Heart left ventricle (tissue), 16 donors: ENCODE measurements at regions of chr12 and their contacts with region 1.

Region 1: GRCh38 chr12:6613776-6614512 is 6.8 kb upstream of the CHD4 start:
- DNase-seq: peak; percentile 92 to 94 (median 93)
- ATAC-seq: peak; percentile 85 to 91 (median 88)
- H3K4me3 ChIP-seq: peak overlapping the region in 4 of 12 donors; percentile 3 to 47 (median 16)
- H3K27ac ChIP-seq: peak overlapping the region; percentile 72 to 98 (median 90)
- H3K4me1 ChIP-seq: peaks cover 0 to 42% (median 27%) of the 10 kb centered on the region in 12 donors
- H3K27me3 ChIP-seq: no peaks in the 10 kb centered on the region
- CTCF ChIP-seq: peak in 1 of 12 donors; percentile 10
- POLR2A ChIP-seq: no peak

Region 2: GRCh38 chr12:5898876-5899275 is 715.1 kb before region 1 on chr12:
- intact Hi-C with region 1: no loop called
- DNase-seq: no peak
- ATAC-seq: no peak
- H3K4me3 ChIP-seq: no peak overlapping the region
- H3K27ac ChIP-seq: no peak overlapping the region
- H3K4me1 ChIP-seq: peaks cover 0 to 5% (median 0%) of the 10 kb centered on the region in 12 donors
- H3K27me3 ChIP-seq: peaks cover 0 to 9% (median 0%) of the 10 kb centered on the region in 9 donors
- CTCF ChIP-seq: no peak
- POLR2A ChIP-seq: no peak

Region 3: GRCh38 chr12:6647083-6647604 is 33.2 kb after region 1 on chr12 and contains the start of gene ACRBP:
- intact Hi-C with region 1: loop called in 3 of 10 experiments (anchors 2 to 5 kb)
- DNase-seq: peak; percentile 80 to 91 (median 87)
- ATAC-seq: peak; percentile 77 to 97 (median 92)
- H3K4me3 ChIP-seq: peak within 1 kb of the TSS; percentile 3 to 65 (median 56)
- H3K27ac ChIP-seq: peak within 1 kb of the TSS in 11 of 12 donors; percentile 19 to 81 (median 62)
- H3K4me1 ChIP-seq: peaks cover 0 to 43% (median 2%) of the 10 kb centered on the region in 12 donors
- H3K27me3 ChIP-seq: no peaks in the 10 kb centered on the region
- CTCF ChIP-seq: no peak
- POLR2A ChIP-seq: peak in 1 of 2 donors; percentile 37
- total RNA-seq, gene ACRBP: 0.32 to 7.2 (median 0.99) TPM in 8 of 9 donors, not detected in the other

Region 4: GRCh38 chr12:6662906-6663742 is 49.2 kb after region 1 on chr12 and contains the start of gene ING4:
- intact Hi-C with region 1: loop called in 6 of 10 experiments (anchors 1 to 10 kb)
- DNase-seq: peak; percentile 97 to 99 (median 98)
- ATAC-seq: peak; percentile 99 to 100 (median 100)
- H3K4me3 ChIP-seq: peak within 1 kb of the TSS; percentile 40 to 86 (median 74)
- H3K27ac ChIP-seq: peak within 1 kb of the TSS; percentile 51 to 90 (median 78)
- H3K4me1 ChIP-seq: peaks cover 0 to 24% (median 12%) of the 10 kb centered on the region in 12 donors
- H3K27me3 ChIP-seq: no peaks in the 10 kb centered on the region
- CTCF ChIP-seq: no peak
- POLR2A ChIP-seq: no peak
- total RNA-seq, gene ING4: 17.4 to 39.0 (median 24.7) TPM

Region 5: GRCh38 chr12:6697584-6698351 is 83.8 kb after region 1 on chr12:
- intact Hi-C with region 1: loop called in 3 of 10 experiments (anchors 5 kb)
- DNase-seq: no peak
- ATAC-seq: peak; percentile 43 to 67 (median 65)
- H3K4me3 ChIP-seq: no peak overlapping the region
- H3K27ac ChIP-seq: no peak overlapping the region
- H3K4me1 ChIP-seq: peaks cover 0 to 15% (median 8%) of the 10 kb centered on the region in 12 donors
- H3K27me3 ChIP-seq: peaks cover 10 to 70% (median 45%) of the 10 kb centered on the region in 9 donors
- CTCF ChIP-seq: peak in 11 of 12 donors; percentile 12 to 50 (median 37)
- POLR2A ChIP-seq: no peak

Region 6: DNA sequence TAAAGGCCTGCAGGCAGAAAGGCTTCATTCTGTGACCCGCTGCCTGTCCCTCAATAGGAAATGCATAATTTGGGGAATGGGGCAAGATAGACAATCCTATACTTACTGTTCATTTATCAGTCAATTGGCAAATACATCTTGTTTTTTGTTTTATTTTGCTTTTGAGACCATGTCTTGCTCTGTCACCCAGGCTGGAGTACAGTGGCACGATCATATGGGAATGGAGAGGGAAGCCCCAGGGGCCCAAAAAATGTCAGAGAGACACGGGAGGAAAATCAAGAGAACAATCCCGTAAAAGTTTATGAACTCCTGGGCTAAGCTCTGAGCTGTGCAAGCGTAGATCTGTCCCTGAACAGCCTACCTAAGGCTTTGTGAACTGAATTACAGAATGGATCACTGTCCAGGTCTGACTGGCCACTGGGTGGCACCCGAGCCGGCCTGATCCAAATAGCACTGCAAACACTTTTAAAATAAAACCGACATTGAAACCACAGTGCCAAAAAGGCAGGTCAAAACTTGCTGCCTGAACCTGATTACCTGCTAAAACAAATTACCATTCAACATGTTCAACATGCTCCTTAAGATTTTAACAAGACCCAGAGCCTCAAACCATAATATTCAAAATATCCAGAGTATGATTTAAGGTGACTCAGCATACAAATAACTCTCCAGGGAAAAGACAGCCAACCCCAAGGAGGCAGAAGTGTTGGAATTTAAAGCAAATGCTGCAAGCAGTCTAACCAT is 121.7 kb after region 1 on chr12:
- intact Hi-C with region 1: no loop called
- DNase-seq: peak; percentile 54 to 76 (median 67)
- ATAC-seq: peak; percentile 58 to 93 (median 91)
- H3K4me3 ChIP-seq: no peak overlapping the region
- H3K27ac ChIP-seq: peak overlapping the region in 9 of 12 donors; percentile 0 to 55 (median 34)
- H3K4me1 ChIP-seq: peaks cover 0 to 12% (median 0%) of the 10 kb centered on the region in 12 donors
- H3K27me3 ChIP-seq: no peaks in the 10 kb centered on the region
- CTCF ChIP-seq: peak; percentile 55 to 83 (median 72)
- POLR2A ChIP-seq: no peak

Region 7: GRCh38 chr12:6778574-6779550 is 164.9 kb after region 1 on chr12:
- intact Hi-C with region 1: loop called in 3 of 10 experiments (anchors 2 to 10 kb)
- DNase-seq: peak; percentile 94 to 96 (median 96)
- ATAC-seq: peak; percentile 93 to 97 (median 97)
- H3K4me3 ChIP-seq: peak overlapping the region in 11 of 12 donors; percentile 23 to 62 (median 47)
- H3K27ac ChIP-seq: peak overlapping the region in 10 of 12 donors; percentile 56 to 82 (median 66)
- H3K4me1 ChIP-seq: peaks cover 0 to 21% (median 14%) of the 10 kb centered on the region in 12 donors
- H3K27me3 ChIP-seq: peaks cover 0 to 21% (median 0%) of the 10 kb centered on the region in 9 donors
- CTCF ChIP-seq: peak; percentile 93 to 99 (median 96)
- POLR2A ChIP-seq: peak in 1 of 2 donors; percentile 27